Naive thymus-derived CD8-positive, alpha-beta T cell (primary cell): ENCODE measurements at regions of chr7 and their contacts with region 1.

Region 1: DNA sequence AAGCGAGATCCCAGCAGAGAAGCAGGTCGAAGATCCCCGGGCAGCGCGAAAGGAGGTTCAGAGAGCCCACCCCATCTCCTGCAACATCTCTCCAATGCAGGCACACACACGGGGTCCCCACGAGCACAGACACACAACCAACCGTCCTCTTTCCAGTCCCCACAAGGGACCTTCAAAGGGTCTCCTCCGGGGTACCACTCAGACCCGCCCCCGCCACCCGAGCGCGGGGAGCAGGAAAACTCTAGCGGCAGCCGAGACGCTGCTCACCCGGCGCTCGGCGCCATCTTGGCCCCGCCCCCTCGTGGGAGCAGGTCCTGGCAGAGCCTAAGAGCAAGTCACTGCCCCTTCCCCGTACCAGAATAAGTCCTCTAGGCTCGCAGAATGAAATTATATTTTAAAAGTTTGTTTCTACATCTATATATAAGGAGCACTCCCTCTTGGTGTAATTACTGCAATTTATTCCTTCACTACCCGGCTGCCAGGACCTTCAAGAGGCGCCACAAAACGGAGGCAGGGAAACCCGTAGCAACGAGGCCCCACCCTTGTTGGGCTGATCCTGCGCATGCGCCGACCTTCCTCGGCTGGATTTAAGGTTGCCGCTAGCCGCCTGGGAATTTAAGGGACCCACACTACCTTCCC is at the starts of genes CNPY4 and TAF6:
- DNase-seq: peak; percentile 90 to 97 (median 94)
- ATAC-seq: peak; percentile 72 to 74
- H3K4me3 Mint-ChIP-seq: peak within 1 kb of the TSS; percentile 91 to 99 (median 97)
- H3K27ac Mint-ChIP-seq: peak within 1 kb of the TSS; percentile 96 to 100 (median 99)
- H3K4me1 Mint-ChIP-seq: peaks cover 11 to 38% (median 29%) of the 10 kb centered on the region in 4 donors
- H3K27me3 Mint-ChIP-seq: no peaks in the 10 kb centered on the region
- polyA plus RNA-seq, gene CNPY4: 19.8 to 23.5 (median 20.6) TPM
- polyA plus RNA-seq, gene TAF6: 21.3 to 39.0 (median 31.5) TPM

Region 2: DNA sequence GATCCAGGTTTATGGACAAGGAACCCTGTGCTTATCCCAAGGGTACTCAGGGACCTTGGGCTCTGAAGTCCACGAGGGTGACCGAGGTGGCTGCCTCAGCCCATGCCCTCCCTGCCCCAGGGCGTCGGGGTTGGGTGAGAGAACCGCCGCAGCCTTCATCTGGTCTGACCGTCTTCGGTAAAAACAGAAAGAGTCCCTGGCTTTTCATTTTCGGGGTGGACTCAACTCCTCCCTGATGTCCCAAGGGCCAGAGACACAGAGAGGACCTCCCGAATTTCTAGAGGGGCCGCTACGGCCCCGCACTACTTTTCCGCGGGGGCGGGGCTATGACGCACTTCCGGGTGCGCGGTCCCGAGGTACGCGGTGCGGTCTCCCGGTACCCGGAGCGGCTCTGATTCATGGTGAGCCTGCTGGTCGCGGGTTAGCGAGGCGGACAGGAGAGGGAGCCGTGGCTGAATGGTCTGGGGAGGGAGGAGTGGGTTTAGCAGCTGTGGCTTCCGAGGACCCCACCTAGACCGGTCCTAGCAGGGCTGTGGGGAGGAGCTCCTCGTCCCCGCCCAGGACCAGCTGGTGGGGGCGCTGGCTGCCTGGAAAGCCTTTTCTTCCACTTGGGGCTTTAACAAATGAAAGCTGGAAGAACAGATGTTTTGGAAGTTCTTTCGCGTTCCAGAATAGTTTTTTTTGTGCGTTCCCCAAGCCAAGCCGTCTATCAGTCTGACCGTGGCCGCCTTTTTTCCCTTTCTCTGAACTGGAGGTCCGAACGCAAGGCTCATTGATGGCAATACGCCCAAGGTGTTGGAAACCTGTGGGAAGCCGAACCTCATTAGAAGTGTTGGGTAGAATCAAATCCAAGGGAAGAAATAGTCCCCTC is 69.5 kb before region 1 on chr7 and contains the start of gene ZSCAN21:
- POLR2A ChIA-PET with region 1: no interaction called
- DNase-seq: peak; percentile 64 to 89 (median 76)
- ATAC-seq: peak; percentile 89 to 91
- H3K4me3 Mint-ChIP-seq: peak within 1 kb of the TSS; percentile 88 to 98 (median 94)
- H3K27ac Mint-ChIP-seq: peak within 1 kb of the TSS; percentile 90 to 99 (median 98)
- H3K4me1 Mint-ChIP-seq: peaks cover 8 to 26% (median 18%) of the 10 kb centered on the region in 4 donors
- H3K27me3 Mint-ChIP-seq: no peaks in the 10 kb centered on the region
- polyA plus RNA-seq, gene ZSCAN21: 5.2 to 11.2 (median 8.2) TPM

Region 3: GRCh38 chr7:100088621-100089457 is 30.3 kb before region 1 on chr7 and contains the start of gene COPS6:
- POLR2A ChIA-PET with region 1: interaction called, 22 read pairs
- DNase-seq: peak; percentile 71 to 92 (median 86)
- ATAC-seq: peak; percentile 82 to 90
- H3K4me3 Mint-ChIP-seq: peak within 1 kb of the TSS; percentile 80 to 92 (median 90)
- H3K27ac Mint-ChIP-seq: peak within 1 kb of the TSS; percentile 92 to 98 (median 95)
- H3K4me1 Mint-ChIP-seq: peaks cover 13 to 28% (median 22%) of the 10 kb centered on the region in 4 donors
- H3K27me3 Mint-ChIP-seq: no peaks in the 10 kb centered on the region
- polyA plus RNA-seq, gene COPS6: 107 to 145 (median 121) TPM

Region 4: GRCh38 chr7:100132697-100133151 is 13.5 kb after region 1 on chr7:
- POLR2A ChIA-PET with region 1: interaction called, 14 read pairs
- DNase-seq: peak; percentile 44 to 82 (median 61)
- ATAC-seq: peak; percentile 77 to 78
- H3K4me3 Mint-ChIP-seq: peak overlapping the region in 3 of 10 donors; percentile 14 to 59 (median 28)
- H3K27ac Mint-ChIP-seq: peak overlapping the region in 8 of 10 donors; percentile 3 to 82 (median 32)
- H3K4me1 Mint-ChIP-seq: peaks cover 9 to 29% (median 24%) of the 10 kb centered on the region in 4 donors
- H3K27me3 Mint-ChIP-seq: no peaks in the 10 kb centered on the region

Region 5: DNA sequence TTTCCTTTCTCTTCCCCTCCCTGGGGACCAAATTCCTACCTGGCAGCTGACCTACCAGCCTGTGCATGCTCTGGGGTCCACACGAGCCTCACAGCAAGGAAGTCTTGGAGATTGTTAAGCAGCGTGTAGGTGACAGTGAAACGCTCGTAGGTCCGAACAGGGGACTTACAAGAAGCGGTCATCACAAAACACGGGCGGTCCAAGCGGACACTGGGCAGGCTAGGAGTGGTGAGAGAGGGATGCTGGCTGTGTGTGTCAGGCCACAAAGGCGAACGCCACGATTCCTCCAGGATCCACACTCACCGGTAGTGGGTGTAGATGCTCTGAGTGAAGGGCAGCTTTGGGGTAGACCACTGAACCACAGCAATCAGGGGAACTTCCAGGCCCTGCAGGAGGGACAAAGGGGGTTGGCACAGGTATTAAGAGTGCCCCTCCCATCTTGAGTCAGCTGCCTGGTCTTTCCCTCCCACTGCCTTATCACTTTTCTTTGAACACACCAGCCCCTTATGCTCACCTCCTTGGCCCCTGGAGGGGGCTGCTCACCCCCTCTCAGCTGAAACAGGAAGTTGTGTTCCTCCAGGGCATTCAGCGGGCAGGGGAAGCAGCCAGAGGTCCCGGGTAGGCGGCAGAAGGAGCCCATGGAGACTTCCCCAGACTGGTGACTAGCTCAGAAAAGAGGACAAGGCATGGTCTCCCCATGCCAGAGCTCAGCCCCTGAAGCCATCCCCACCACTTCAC is 37.3 kb after region 1 on chr7:
- POLR2A ChIA-PET with region 1: no interaction called
- DNase-seq: peak in 5 of 10 donors; percentile 34 to 55 (median 51)
- ATAC-seq: peak; percentile 37 to 76
- H3K4me3 Mint-ChIP-seq: peak overlapping the region; percentile 79 to 89 (median 86)
- H3K27ac Mint-ChIP-seq: peak overlapping the region; percentile 77 to 94 (median 90)
- H3K4me1 Mint-ChIP-seq: peaks cover 18 to 65% (median 59%) of the 10 kb centered on the region in 4 donors
- H3K27me3 Mint-ChIP-seq: no peaks in the 10 kb centered on the region

Region 6: DNA sequence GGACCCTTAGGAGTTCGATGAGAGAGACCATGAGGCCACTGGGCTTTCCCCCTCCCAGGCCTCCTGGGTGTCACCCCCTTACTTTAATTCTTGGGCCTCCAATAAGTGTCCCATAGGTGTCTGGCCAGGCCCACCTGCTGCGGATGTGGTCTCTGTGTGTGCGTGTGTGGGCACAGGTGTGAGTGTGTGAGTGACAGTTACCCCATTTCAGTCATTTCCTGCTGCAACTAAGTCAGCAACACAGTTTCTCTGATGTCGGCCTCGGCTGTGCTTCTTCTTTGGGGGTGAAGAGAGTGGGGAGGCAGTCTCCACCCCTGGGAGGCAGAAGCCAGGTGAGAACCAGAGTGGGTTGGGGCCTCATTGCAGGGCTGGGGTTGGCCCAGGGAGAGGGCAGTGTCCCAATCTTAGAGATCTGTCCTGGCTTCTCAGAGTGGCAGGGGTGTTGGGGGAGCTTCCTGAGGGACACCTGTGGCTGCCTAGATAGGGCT is 102.1 kb after region 1 on chr7:
- POLR2A ChIA-PET with region 1: interaction called, 14 read pairs
- DNase-seq: peak; percentile 54 to 94 (median 84)
- ATAC-seq: peak; percentile 62 to 80
- H3K4me3 Mint-ChIP-seq: peak overlapping the region; percentile 88 to 99 (median 96)
- H3K27ac Mint-ChIP-seq: peak overlapping the region; percentile 96 to 100 (median 98)
- H3K4me1 Mint-ChIP-seq: peaks cover 26 to 80% (median 71%) of the 10 kb centered on the region in 4 donors
- H3K27me3 Mint-ChIP-seq: peaks cover 0 to 2% (median 0%) of the 10 kb centered on the region in 5 donors